ENCODE measurements at regions of chr1 and their contacts with region 1.

Region 1: DNA sequence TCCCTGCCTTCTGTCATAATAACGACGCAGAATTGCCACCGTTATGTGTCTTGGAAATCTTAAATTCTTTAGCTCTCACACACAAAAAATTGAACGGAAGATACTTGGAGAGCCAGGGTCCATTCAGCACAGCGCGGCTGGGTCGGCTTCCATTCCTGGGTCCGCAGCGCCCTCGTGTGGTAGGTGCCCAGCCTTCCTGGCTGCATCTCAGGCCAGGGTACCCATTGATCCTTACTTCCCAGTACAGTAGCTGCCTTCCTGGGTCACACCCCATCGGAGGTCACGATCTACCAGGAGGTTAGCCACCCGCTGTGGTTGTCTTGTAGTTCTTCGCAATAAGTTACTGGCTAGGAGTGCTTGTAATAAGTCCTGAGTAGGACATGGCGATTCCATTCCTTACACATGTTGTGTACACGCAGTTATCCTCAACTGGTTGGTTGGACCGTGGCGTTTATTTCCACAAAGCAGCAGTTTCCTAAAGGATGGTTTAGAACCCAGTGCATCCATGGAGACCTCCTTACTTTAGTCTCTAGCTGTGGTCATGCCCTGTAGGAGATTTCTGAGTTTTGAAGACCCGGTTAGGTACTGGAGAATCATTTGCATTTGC is 9.9 kb upstream of the MTARC1 start:
- DNase-seq: peak; percentile 66 to 91 (median 83)
- H3K4me3 ChIP-seq: peak overlapping the region in 18 of 59 donors; percentile 5 to 35 (median 21)
- H3K27ac ChIP-seq: no peak overlapping the region
- H3K27me3 ChIP-seq: no peaks in the 10 kb centered on the region
- CTCF ChIP-seq: peak; percentile 65 to 99 (median 92)

Region 2: GRCh38 chr1:219837274-219837993 is 939.4 kb before region 1 on chr1:
- intact Hi-C with region 1: loop called in 1 of 2 experiments (anchors 5 kb)
- DNase-seq: no peak
- H3K4me3 ChIP-seq: no peak overlapping the region
- H3K27ac ChIP-seq: no peak overlapping the region
- H3K27me3 ChIP-seq: peaks cover 0 to 10% (median 0%) of the 10 kb centered on the region in 45 donors
- CTCF ChIP-seq: peak; percentile 21 to 80 (median 62)

Region 3: GRCh38 chr1:220189750-220190347 is 587.0 kb before region 1 on chr1:
- intact Hi-C with region 1: loop called (anchors 10 kb)
- DNase-seq: no peak
- H3K4me3 ChIP-seq: no peak overlapping the region
- H3K27ac ChIP-seq: no peak overlapping the region
- H3K27me3 ChIP-seq: no peaks in the 10 kb centered on the region
- CTCF ChIP-seq: peak in 55 of 56 donors; percentile 18 to 75 (median 54)

Region 4: DNA sequence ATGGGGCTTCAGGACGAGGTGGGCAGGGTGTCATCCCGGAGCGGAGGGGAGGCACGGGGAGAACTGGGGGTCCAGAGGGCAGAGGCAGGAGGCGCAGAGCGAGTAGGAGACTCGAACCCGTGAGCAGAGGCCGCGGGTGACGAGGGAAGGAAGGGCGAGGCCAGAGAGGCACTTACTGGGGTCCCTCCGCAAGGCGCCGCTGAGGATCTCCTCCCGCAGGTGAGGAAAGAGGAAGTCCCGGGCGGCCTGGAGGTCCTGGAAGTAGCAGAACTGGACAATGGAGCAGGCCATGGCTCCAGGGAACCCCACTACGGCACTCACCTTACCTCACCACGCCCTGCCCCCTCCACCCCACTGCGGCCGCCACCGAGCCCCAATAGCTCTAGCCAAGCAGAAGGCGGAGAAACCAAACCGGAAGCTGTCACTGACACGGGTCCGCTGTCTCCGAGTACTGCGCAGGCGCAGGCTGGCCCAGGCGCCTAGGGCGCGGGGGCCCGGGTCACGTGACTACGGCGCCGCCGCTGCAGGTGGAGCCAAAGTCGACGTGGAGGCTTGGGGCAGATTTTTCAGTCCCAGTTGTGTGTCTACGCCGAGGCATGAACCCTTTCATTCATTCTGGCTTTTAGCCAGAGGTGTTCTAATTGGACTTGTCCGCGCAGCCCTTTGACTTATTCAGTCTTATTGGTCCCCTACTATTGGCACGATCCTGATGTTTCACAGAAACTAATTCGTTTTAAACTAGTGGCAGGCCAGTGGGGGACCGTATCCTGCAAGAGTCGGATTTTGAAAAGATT is 504.6 kb before region 1 on chr1 and contains the start of gene RAB3GAP2:
- intact Hi-C with region 1: loop called in 1 of 2 experiments (anchors 10 kb)
- DNase-seq: peak; percentile 80 to 96 (median 92)
- H3K4me3 ChIP-seq: peak within 1 kb of the TSS; percentile 47 to 99 (median 93)
- H3K27ac ChIP-seq: peak within 1 kb of the TSS in 55 of 59 donors; percentile 36 to 92 (median 78)
- H3K27me3 ChIP-seq: no peaks in the 10 kb centered on the region
- CTCF ChIP-seq: peak in 33 of 56 donors; percentile 7 to 55 (median 29)
- total RNA-seq, gene RAB3GAP2: 35.9 to 76.7 (median 50.9) TPM

Region 5: GRCh38 chr1:220680085-220680687 is 96.6 kb before region 1 on chr1:
- intact Hi-C with region 1: loop called (anchors 2 to 10 kb)
- DNase-seq: peak in 1 of 10 donors; percentile 23
- H3K4me3 ChIP-seq: no peak overlapping the region
- H3K27ac ChIP-seq: no peak overlapping the region
- H3K27me3 ChIP-seq: no peaks in the 10 kb centered on the region
- CTCF ChIP-seq: peak; percentile 42 to 80 (median 71)

Region 6: DNA sequence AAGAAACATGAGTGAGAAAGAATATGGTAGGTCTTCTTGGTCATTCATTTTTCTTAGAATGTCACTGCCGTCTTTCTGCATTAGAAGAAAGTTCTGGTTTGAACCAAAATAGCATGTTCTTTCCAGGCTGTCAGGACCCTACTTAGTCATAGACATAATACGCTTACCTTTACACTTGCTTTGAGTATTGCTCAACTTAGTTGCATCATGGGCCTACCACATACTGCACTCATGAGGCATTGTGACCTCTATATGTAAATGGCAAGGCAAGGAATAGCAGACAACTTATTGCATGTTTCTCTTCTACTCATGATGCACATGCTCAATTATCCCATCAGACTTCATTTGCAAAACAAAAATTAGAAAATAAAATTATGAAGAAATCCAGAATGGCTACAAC is 517.4 kb after region 1 on chr1:
- intact Hi-C with region 1: no loop called
- DNase-seq: no peak
- H3K4me3 ChIP-seq: no peak overlapping the region
- H3K27ac ChIP-seq: no peak overlapping the region
- H3K27me3 ChIP-seq: no peaks in the 10 kb centered on the region
- CTCF ChIP-seq: no peak

Measured in dorsolateral prefrontal cortex (tissue), 120 donors.